ENCODE measurements at regions of chr3 and their contacts with region 1.

Region 1: GRCh38 chr3:50660386-50660785 is 14.3 kb upstream of the DOCK3 start:
- DNase-seq: no peak
- ATAC-seq: no peak
- H3K4me3 ChIP-seq: no peak overlapping the region
- H3K27ac ChIP-seq: no peak overlapping the region
- H3K4me1 ChIP-seq: peaks cover 7% of the 10 kb centered on the region; the same call in 2 of the 3 replicates
- CTCF ChIP-seq: no peak
- EP300 ChIP-seq: no peak
- POLR2A ChIP-seq: no peak
- RAD21 ChIP-seq: no peak

Region 2: GRCh38 chr3:49428697-49429100 is 1231.7 kb before region 1 on chr3:
- CTCF ChIA-PET with region 1: no interaction called
- POLR2A ChIA-PET with region 1: interaction called, 10 read pairs
- DNase-seq: peak in 1 of 2 experiments; percentile 46
- ATAC-seq: peak; percentile 28 to 72; a peak in 5 of 6 replicates
- H3K4me3 ChIP-seq: peak overlapping the region; percentile 61
- H3K27ac ChIP-seq: peak overlapping the region; percentile 88 to 91
- H3K4me1 ChIP-seq: peaks cover 7% of the 10 kb centered on the region; the same call in 2 of the 3 replicates
- CTCF ChIP-seq: no peak
- EP300 ChIP-seq: no peak
- POLR2A ChIP-seq: no peak
- RAD21 ChIP-seq: no peak

Region 3: GRCh38 chr3:50298836-50299637 is 361.3 kb before region 1 on chr3 and contains the starts of genes HYAL3 and NAA80:
- CTCF ChIA-PET with region 1: no interaction called
- POLR2A ChIA-PET with region 1: no interaction called
- DNase-seq: peak; percentile 80 to 99
- ATAC-seq: peak; percentile 80 to 88
- H3K4me3 ChIP-seq: peak within 1 kb of the TSS; percentile 77
- H3K27ac ChIP-seq: peak within 1 kb of the TSS; percentile 92 to 98
- H3K4me1 ChIP-seq: peaks cover 26% of the 10 kb centered on the region
- CTCF ChIP-seq: no peak
- EP300 ChIP-seq: no peak
- POLR2A ChIP-seq: peak; percentile 87
- RAD21 ChIP-seq: no peak
- polyA plus RNA-seq, gene HYAL3: 3.0 and 5.2 TPM in 2 replicates
- polyA plus RNA-seq, gene NAA80: 3.1 and 4.5 TPM in 2 replicates

Region 4: GRCh38 chr3:50474717-50475116 is 185.7 kb before region 1 on chr3:
- CTCF ChIA-PET with region 1: no interaction called
- POLR2A ChIA-PET with region 1: no interaction called
- DNase-seq: peak in 1 of 2 experiments; percentile 6
- ATAC-seq: no peak; a peak in 1 of 6 replicates
- H3K4me3 ChIP-seq: no peak overlapping the region
- H3K27ac ChIP-seq: no peak overlapping the region
- H3K4me1 ChIP-seq: no peaks in the 10 kb centered on the region
- CTCF ChIP-seq: no peak
- EP300 ChIP-seq: no peak
- POLR2A ChIP-seq: no peak
- RAD21 ChIP-seq: no peak

Region 5: DNA sequence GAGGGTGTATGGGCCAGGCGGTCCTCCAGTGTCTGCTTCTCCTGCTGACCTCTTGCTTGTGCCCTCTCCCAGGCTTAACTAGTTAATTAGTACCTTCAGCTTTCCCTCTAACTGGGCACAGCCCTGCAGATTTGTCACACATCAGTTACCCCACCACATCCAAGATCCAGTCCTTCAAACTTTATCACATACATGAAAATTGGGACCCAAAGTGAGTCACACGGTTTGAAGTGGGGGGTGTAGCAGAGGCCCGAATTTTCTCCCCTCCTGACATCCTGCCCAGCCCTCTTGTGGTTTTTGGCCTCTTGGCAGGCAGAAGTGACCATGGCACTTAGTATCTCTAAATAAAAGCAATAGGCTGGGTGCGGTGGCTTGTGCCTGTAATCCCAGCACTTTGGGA is 39.6 kb before region 1 on chr3:
- CTCF ChIA-PET with region 1: no interaction called
- POLR2A ChIA-PET with region 1: no interaction called
- DNase-seq: no peak
- ATAC-seq: no peak
- H3K4me3 ChIP-seq: no peak overlapping the region
- H3K27ac ChIP-seq: no peak overlapping the region
- H3K4me1 ChIP-seq: peaks cover 11% of the 10 kb centered on the region; the same call in 1 of the 3 replicates
- CTCF ChIP-seq: no peak
- EP300 ChIP-seq: no peak
- POLR2A ChIP-seq: no peak
- RAD21 ChIP-seq: no peak

Region 6: GRCh38 chr3:50642382-50642781 is 18.0 kb before region 1 on chr3:
- CTCF ChIA-PET with region 1: no interaction called
- POLR2A ChIA-PET with region 1: no interaction called
- DNase-seq: no peak
- ATAC-seq: no peak
- H3K4me3 ChIP-seq: no peak overlapping the region
- H3K27ac ChIP-seq: no peak overlapping the region
- H3K4me1 ChIP-seq: no peaks in the 10 kb centered on the region
- CTCF ChIP-seq: no peak
- EP300 ChIP-seq: no peak
- POLR2A ChIP-seq: no peak
- RAD21 ChIP-seq: no peak